ENCODE measurements at regions of chr1 and their contacts with region 1.

Region 1: GRCh38 chr1:63917571-63918417 is 144.0 kb downstream of the ROR1 start:
- DNase-seq: peak; percentile 80
- H3K4me3 Mint-ChIP-seq: peak overlapping the region; percentile 57
- H3K27ac Mint-ChIP-seq: peak overlapping the region; percentile 83
- H3K4me1 Mint-ChIP-seq: peaks cover 93% of the 10 kb centered on the region
- H3K27me3 Mint-ChIP-seq: no peaks in the 10 kb centered on the region
- CTCF ChIP-seq: peak; percentile 78

Region 2: GRCh38 chr1:63674238-63674864 is 243.4 kb before region 1 on chr1:
- CTCF ChIA-PET with region 1: interaction called, 12 read pairs
- intact Hi-C with region 1: loop called (anchors 5 kb)
- DNase-seq: peak; percentile 89
- H3K4me3 Mint-ChIP-seq: peak overlapping the region; percentile 2
- H3K27ac Mint-ChIP-seq: peak overlapping the region; percentile 62
- H3K4me1 Mint-ChIP-seq: peaks cover 53% of the 10 kb centered on the region
- H3K27me3 Mint-ChIP-seq: no peaks in the 10 kb centered on the region
- CTCF ChIP-seq: peak; percentile 69

Region 3: GRCh38 chr1:63773815-63774616 is 143.8 kb before region 1 on chr1 and contains the start of gene ROR1:
- CTCF ChIA-PET with region 1: interaction called, 11 read pairs
- intact Hi-C with region 1: loop called (anchors 2 kb)
- DNase-seq: peak; percentile 94
- H3K4me3 Mint-ChIP-seq: peak within 1 kb of the TSS; percentile 99
- H3K27ac Mint-ChIP-seq: peak within 1 kb of the TSS; percentile 79
- H3K4me1 Mint-ChIP-seq: peaks cover 58% of the 10 kb centered on the region
- H3K27me3 Mint-ChIP-seq: no peaks in the 10 kb centered on the region
- CTCF ChIP-seq: peak; percentile 81
- total RNA-seq, gene ROR1: 24.5 and 33.8 TPM in 2 replicates

Region 4: DNA sequence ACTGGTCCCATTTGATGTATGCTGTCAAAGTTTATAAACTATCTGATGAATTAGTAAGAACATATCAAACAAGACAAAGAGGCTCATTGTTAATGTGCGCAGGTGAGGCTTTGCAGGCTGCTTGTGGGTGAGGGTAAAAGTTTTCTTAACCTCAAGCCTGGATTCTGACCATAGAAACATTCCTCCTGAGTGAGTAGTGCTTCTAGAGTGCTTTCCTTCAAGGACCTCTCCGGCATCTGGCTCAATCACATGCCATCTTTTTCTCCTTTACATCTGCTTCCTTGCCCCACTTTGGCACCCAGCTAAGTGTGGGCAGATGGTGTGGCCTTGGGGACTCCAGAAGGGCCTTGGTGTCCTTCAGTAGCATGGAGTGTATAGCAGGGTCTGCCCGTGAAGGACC is 40.0 kb before region 1 on chr1:
- CTCF ChIA-PET with region 1: interaction called, 5 read pairs
- intact Hi-C with region 1: loop called (anchors 2 kb)
- DNase-seq: peak; percentile 67
- H3K4me3 Mint-ChIP-seq: no peak overlapping the region
- H3K27ac Mint-ChIP-seq: peak overlapping the region; percentile 68
- H3K4me1 Mint-ChIP-seq: peaks cover 87% of the 10 kb centered on the region
- H3K27me3 Mint-ChIP-seq: no peaks in the 10 kb centered on the region
- CTCF ChIP-seq: no peak

Region 5: GRCh38 chr1:64136752-64137411 is 219.1 kb after region 1 on chr1:
- CTCF ChIA-PET with region 1: interaction called, 11 read pairs
- intact Hi-C with region 1: loop called (anchors 1 kb)
- DNase-seq: peak; percentile 82
- H3K4me3 Mint-ChIP-seq: no peak overlapping the region
- H3K27ac Mint-ChIP-seq: no peak overlapping the region
- H3K4me1 Mint-ChIP-seq: peaks cover 20% of the 10 kb centered on the region
- H3K27me3 Mint-ChIP-seq: no peaks in the 10 kb centered on the region
- CTCF ChIP-seq: peak; percentile 86